Common myeloid progenitor, CD34-positive (primary cell): ENCODE measurements at regions of chr2 and their contacts with region 1.

Region 1: DNA sequence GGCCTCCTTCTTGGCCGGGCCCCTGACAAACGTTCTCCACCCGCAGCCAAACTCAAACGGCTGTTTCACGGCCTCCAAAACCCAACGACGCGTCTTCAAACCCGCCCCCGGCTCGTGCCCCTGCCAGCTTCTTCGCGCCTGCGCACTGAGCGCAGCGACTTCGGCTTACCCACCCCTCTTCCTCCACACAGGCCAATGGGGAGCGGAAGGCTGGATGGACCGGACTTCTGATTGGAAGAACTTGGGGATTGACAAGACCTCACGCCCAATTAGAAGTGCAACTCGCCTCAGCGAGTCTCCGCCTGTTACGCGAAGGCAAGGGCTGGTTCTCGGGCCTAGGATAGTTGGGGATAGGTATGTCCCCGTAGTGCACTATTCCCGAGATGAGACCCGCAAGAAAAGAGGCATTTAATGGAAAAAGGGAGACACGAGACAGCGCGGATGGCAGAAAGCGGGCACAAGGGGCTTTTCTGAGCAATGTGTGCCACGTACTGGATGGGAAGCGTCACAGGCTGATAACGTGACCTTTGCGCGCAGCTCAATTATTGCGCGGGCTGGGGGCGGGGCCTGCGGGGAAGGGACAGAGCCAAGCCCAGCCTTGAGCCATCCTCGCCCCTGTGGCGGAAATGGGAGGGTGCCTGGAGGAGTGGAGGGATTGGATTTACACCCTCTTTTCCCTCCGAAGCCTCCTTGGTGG is at the start of gene LAPTM4A:
- DNase-seq: peak; percentile 100
- H3K4me3 ChIP-seq: peak within 1 kb of the TSS; percentile 78 to 100 (median 90)
- H3K27ac ChIP-seq: peak within 1 kb of the TSS; percentile 97
- H3K4me1 ChIP-seq: peaks cover 18 to 40% (median 33%) of the 10 kb centered on the region in 4 experiments
- H3K27me3 ChIP-seq: peaks cover 0 to 4% (median 2%) of the 10 kb centered on the region in 5 experiments

Region 2: GRCh38 chr2:20040489-20041172 is 11.0 kb before region 1 on chr2:
- CTCF ChIA-PET with region 1: interaction called, 28 read pairs
- POLR2A ChIA-PET with region 1: interaction called, 4 read pairs
- DNase-seq: peak in 1 of 3 donors; percentile 24
- H3K4me3 ChIP-seq: no peak overlapping the region
- H3K27ac ChIP-seq: no peak overlapping the region
- H3K4me1 ChIP-seq: peaks cover 0 to 11% (median 5%) of the 10 kb centered on the region in 4 experiments
- H3K27me3 ChIP-seq: no peaks in the 10 kb centered on the region